AG04449 (cell line): ENCODE measurements at regions of chr1 and their contacts with region 1.

Region 1: DNA sequence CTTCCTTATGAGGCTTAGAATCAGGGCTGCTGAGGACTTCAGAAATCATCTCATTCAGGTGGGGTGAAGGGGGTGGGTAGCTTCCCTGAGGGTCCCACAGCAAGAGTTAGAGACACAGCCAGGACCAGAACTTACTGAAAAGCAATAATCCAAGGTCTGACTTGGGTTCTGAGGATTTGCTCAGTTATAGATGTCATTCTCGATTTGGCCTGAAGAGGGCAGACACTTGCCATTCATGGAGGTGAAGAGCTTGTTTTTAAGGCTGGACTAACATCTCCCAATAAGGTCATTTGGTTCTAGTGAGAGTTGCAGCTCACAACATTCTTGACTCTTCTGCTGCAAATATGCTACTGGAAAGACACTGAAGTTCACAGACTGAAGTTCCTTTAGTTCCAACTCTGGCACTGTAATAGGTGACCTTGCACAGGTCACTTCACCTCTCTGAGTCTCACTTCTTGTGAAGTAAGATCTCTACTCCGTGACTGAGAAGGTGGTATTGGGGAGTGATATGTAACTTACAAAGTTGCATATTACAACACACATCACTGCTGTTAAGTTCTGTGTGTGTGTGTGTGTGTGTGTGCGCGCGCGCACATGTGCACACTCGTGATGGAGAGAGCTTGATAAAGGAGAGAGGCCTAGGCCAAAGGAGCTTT is 69.8 kb upstream of the DIRAS3 start:
- DNase-seq: peak; percentile 74
- H3K4me3 ChIP-seq: no peak overlapping the region
- CTCF ChIP-seq: peak; percentile 67

Region 2: DNA sequence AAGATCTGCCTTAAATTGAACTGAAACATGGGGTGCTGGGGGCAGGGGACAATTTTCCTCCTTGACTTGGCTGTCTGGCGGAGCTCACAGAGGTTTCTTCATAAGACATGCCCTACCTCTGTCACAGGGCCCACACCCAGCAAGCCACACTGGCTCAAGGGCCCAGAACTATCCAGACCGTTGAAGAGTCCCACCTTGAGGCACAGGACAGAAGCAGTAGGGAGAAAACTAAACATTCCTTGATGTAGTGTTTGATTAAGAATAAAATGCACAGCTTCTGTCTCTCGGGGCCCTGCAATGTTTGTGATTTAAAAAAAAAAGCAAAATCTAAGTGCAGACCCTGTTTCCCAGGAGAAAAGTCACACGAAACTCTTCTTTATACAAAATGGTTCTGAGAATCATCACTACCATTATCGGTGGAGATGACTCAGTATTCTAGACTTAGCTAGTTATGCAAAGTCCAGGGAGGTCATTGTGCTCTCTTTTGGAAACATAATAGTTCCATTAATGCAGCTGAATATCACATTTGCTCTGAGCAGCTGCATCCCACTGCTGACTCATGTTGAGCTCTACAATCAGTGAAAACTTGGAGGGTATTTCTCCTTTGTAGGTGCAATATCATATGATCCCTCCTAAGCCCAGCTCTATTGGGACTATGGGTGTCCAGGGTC is 16.2 kb before region 1 on chr1:
- CTCF ChIA-PET with region 1: interaction called, 34 read pairs
- POLR2A ChIA-PET with region 1: no interaction called
- DNase-seq: no peak
- H3K4me3 ChIP-seq: no peak overlapping the region
- CTCF ChIP-seq: no peak

Region 3: GRCh38 chr1:68232354-68233148 is 112.3 kb after region 1 on chr1 and contains the start of gene WLS:
- CTCF ChIA-PET with region 1: interaction called, 46 read pairs
- POLR2A ChIA-PET with region 1: interaction called, 10 read pairs
- DNase-seq: no peak
- H3K4me3 ChIP-seq: peak within 1 kb of the TSS; percentile 81
- CTCF ChIP-seq: peak; percentile 9

Region 4: GRCh38 chr1:68331117-68331865 is 211.0 kb after region 1 on chr1:
- CTCF ChIA-PET with region 1: interaction called, 964 read pairs
- POLR2A ChIA-PET with region 1: no interaction called
- DNase-seq: peak; percentile 62
- H3K4me3 ChIP-seq: no peak overlapping the region
- CTCF ChIP-seq: no peak

Region 5: DNA sequence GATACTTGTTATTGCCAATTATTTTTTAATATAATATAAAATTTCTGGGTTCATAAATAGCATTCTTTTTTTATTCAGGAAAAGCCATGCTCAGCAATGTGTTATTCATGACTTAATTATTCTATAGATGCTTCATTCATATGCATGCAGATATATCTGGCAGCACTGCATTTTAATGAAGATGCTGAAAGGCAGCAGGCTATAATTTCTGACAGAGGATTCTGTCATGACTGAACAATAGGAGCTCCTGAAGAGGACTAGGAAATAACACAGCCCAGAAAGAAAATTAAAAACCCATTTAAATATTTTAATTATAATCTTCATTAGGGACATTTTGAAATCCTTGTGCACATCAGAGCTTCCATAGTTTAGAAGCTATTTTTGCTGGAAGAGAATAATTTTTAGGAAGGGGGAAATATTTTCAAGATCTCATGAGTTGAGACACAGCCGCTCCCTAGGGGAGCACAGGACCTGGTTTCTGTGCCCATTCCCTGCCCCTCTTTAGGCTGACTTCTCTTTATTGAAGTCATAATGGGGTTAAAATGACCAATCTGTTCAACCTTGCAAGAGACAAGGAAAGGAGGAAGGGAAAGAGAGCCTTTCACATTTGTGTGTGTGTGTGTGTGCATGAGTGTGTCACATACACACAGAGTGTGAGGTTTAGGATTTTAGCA is 245.6 kb after region 1 on chr1:
- CTCF ChIA-PET with region 1: interaction called, 18 read pairs
- POLR2A ChIA-PET with region 1: no interaction called
- DNase-seq: no peak
- H3K4me3 ChIP-seq: no peak overlapping the region
- CTCF ChIP-seq: no peak

Region 6: GRCh38 chr1:68442822-68443556 is 322.7 kb after region 1 on chr1:
- CTCF ChIA-PET with region 1: interaction called, 88 read pairs
- POLR2A ChIA-PET with region 1: no interaction called
- DNase-seq: peak; percentile 9
- H3K4me3 ChIP-seq: no peak overlapping the region
- CTCF ChIP-seq: peak; percentile 61